GM10248 (cell line): ENCODE measurements at regions of chr18 and their contacts with region 1.

Region 1: GRCh38 chr18:26468931-26469340 is 79.4 kb downstream of the KCTD1 start:
- DNase-seq: peak; percentile 41
- CTCF ChIP-seq: peak; percentile 31

Region 2: DNA sequence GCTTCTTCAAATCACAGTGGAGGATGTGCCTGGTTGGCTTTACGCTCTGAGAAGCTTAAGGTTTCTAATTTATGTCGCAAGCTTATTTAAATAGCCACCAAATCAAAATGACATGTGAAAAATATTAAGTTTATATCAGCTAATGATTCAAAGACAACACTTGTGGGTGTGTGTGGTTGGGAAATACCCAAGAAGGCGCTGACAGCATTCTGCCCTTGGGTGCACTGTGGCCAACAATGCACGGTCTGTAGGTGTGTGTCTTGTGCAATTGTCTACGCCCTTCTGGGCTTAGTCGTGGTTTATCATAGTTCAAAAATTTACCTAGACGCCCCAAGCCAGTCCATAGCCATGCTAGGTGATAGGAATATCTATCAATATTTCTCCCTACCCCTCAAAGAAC is 18.5 kb after region 1 on chr18:
- CTCF ChIA-PET with region 1: interaction called, 13 read pairs
- POLR2A ChIA-PET with region 1: no interaction called
- DNase-seq: peak; percentile 44
- CTCF ChIP-seq: no peak

Region 3: GRCh38 chr18:26719900-26720299 is 251.0 kb after region 1 on chr18:
- CTCF ChIA-PET with region 1: no interaction called
- POLR2A ChIA-PET with region 1: no interaction called
- DNase-seq: no peak
- CTCF ChIP-seq: no peak